Adrenal gland (tissue), 19 donors: ENCODE measurements at regions of chrX and their contacts with region 1.

Region 1: GRCh38 chrX:71565474-71566041 is 12.7 kb upstream of the GCNA start:
- DNase-seq: no peak
- H3K4me3 ChIP-seq: no peak overlapping the region
- H3K27ac ChIP-seq: no peak overlapping the region
- H3K4me1 ChIP-seq: no peaks in the 10 kb centered on the region
- H3K27me3 ChIP-seq: no peaks in the 10 kb centered on the region
- CTCF ChIP-seq: no peak
- POLR2A ChIP-seq: no peak

Region 2: DNA sequence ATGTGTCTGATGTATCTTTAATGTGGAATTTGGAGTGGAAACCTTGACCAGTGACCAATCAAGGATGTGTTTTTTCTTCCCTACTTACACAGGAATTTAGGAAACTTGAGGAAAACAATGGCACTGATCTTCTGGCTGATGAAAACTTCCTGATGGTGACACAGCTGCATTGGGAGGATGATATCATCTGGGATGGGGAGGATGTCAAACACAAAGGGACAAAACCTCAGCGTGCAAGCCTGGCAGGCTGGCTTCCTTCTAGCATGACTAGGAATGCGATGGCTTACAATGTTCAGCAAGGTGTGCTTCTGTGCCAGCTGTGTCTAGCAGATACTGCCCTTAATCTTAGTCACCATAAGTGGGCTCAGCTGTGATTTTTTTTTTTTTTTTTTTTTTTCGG is 186.8 kb before region 1 on chrX:
- intact Hi-C with region 1: loop called in 1 of 2 experiments (anchors 10 kb)
- DNase-seq: no peak
- H3K4me3 ChIP-seq: no peak overlapping the region
- H3K27ac ChIP-seq: no peak overlapping the region
- H3K4me1 ChIP-seq: no peaks in the 10 kb centered on the region
- H3K27me3 ChIP-seq: no peaks in the 10 kb centered on the region
- CTCF ChIP-seq: no peak
- POLR2A ChIP-seq: no peak

Region 3: DNA sequence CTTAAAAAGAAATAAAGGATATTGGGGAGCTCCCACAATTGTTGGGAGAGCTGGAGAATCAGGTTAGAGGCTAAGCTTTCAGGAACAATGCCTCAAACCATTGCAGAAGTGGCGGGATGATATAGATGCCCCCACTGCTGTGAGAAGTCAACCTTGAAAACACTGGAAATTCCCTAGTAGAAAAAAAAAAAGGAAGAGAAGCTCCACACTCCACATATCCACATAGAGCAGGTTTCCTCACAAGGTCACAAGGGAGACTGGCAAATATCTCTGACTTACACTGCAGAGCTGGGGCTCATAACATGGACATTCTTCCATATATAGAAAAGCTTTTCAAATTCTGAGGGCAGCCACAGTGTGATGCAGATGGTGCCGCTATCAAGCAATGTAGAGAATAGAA is 55.4 kb before region 1 on chrX:
- intact Hi-C with region 1: no loop called
- DNase-seq: no peak
- H3K4me3 ChIP-seq: no peak overlapping the region
- H3K27ac ChIP-seq: no peak overlapping the region
- H3K4me1 ChIP-seq: no peaks in the 10 kb centered on the region
- H3K27me3 ChIP-seq: no peaks in the 10 kb centered on the region
- CTCF ChIP-seq: no peak
- POLR2A ChIP-seq: no peak

Region 4: GRCh38 chrX:71606536-71607216 is 41.1 kb after region 1 on chrX:
- intact Hi-C with region 1: no loop called
- DNase-seq: peak in 1 of 7 donors; percentile 31
- H3K4me3 ChIP-seq: no peak overlapping the region
- H3K27ac ChIP-seq: peak overlapping the region in 3 of 5 donors; percentile 13 to 20 (median 17)
- H3K4me1 ChIP-seq: no peaks in the 10 kb centered on the region
- H3K27me3 ChIP-seq: no peaks in the 10 kb centered on the region
- CTCF ChIP-seq: no peak
- POLR2A ChIP-seq: no peak